Endothelial cell of umbilical vein (primary cell): ENCODE measurements at regions of chr15 and their contacts with region 1.

Region 1: DNA sequence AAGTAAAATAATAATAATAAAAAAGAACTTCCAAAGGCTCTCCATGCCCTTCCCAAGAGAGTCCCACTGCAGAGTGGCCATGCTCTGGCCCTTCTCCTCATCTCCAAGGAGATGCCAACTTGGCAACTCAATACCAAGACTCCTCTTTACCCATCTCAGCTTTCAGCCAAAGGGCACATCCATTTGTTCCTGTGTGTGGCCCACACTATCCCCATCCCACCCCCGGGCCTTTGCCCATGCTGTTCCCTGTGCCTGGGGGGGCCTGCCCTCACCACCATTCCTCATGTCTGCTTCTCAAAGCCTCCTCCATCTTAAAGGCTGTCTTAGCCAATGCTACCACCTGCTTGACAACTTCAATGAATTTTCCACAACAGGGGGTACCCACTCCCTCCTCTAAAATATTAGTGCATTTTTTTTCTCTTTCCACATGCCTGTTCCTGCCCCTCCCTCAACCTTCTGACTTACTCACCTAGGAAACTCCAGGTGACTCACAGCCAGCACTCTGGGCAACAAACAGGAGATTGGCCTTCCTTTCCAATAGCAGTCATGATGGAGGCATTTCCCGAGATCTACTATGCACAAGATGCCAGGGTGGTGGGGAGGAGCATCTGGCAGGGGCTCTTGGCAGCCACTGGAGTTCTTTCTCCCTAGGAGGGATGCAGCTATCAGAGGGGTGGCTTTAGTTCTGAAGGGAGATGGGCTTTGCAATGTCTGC is 109.4 kb upstream of the SMAD3 start:
- DNase-seq: peak; percentile 85
- H3K4me3 ChIP-seq: no peak overlapping the region
- H3K27ac ChIP-seq: peak overlapping the region; percentile 59
- H3K4me1 ChIP-seq: peaks cover 24% of the 10 kb centered on the region
- H3K27me3 ChIP-seq: no peaks in the 10 kb centered on the region
- CTCF ChIP-seq: no peak
- POLR2A ChIP-seq: no peak

Region 2: GRCh38 chr15:66765478-66766281 is 190.3 kb before region 1 on chr15:
- CTCF ChIA-PET with region 1: no interaction called
- POLR2A ChIA-PET with region 1: no interaction called
- dilution Hi-C with region 1: no loop called
- intact Hi-C with region 1: no loop called
- DNase-seq: peak; percentile 93
- H3K4me3 ChIP-seq: no peak overlapping the region
- H3K27ac ChIP-seq: peak overlapping the region; percentile 84
- H3K4me1 ChIP-seq: peaks cover 66% of the 10 kb centered on the region
- H3K27me3 ChIP-seq: no peaks in the 10 kb centered on the region
- CTCF ChIP-seq: no peak
- POLR2A ChIP-seq: peak; percentile 30

Region 3: GRCh38 chr15:66931768-66932633 is 24.0 kb before region 1 on chr15:
- CTCF ChIA-PET with region 1: no interaction called
- POLR2A ChIA-PET with region 1: no interaction called
- dilution Hi-C with region 1: no loop called
- intact Hi-C with region 1: loop called (anchors 2 kb)
- DNase-seq: peak; percentile 58
- H3K4me3 ChIP-seq: no peak overlapping the region
- H3K27ac ChIP-seq: peak overlapping the region; percentile 21
- H3K4me1 ChIP-seq: peaks cover 14% of the 10 kb centered on the region
- H3K27me3 ChIP-seq: no peaks in the 10 kb centered on the region
- CTCF ChIP-seq: no peak
- POLR2A ChIP-seq: no peak

Region 4: GRCh38 chr15:66986951-66987350 is 30.9 kb after region 1 on chr15:
- CTCF ChIA-PET with region 1: no interaction called
- POLR2A ChIA-PET with region 1: no interaction called
- dilution Hi-C with region 1: no loop called
- intact Hi-C with region 1: no loop called
- DNase-seq: no peak
- H3K4me3 ChIP-seq: no peak overlapping the region
- H3K27ac ChIP-seq: no peak overlapping the region
- H3K4me1 ChIP-seq: no peaks in the 10 kb centered on the region
- H3K27me3 ChIP-seq: peaks cover 2 to 3% of the 10 kb centered on the region in 2 experiments
- CTCF ChIP-seq: no peak
- POLR2A ChIP-seq: no peak

Region 5: GRCh38 chr15:67013696-67014095 is 57.7 kb after region 1 on chr15:
- CTCF ChIA-PET with region 1: no interaction called
- POLR2A ChIA-PET with region 1: no interaction called
- dilution Hi-C with region 1: no loop called
- intact Hi-C with region 1: loop called (anchors 2 kb)
- DNase-seq: peak; percentile 97
- H3K4me3 ChIP-seq: no peak overlapping the region
- H3K27ac ChIP-seq: peak overlapping the region; percentile 73
- H3K4me1 ChIP-seq: peaks cover 21% of the 10 kb centered on the region
- H3K27me3 ChIP-seq: no peaks in the 10 kb centered on the region
- CTCF ChIP-seq: no peak
- POLR2A ChIP-seq: peak; percentile 60

Region 6: GRCh38 chr15:67024314-67024997 is 68.4 kb after region 1 on chr15:
- CTCF ChIA-PET with region 1: interaction called, 3 read pairs
- POLR2A ChIA-PET with region 1: no interaction called
- dilution Hi-C with region 1: no loop called
- intact Hi-C with region 1: loop called (anchors 1 kb)
- DNase-seq: peak; percentile 92
- H3K4me3 ChIP-seq: no peak overlapping the region
- H3K27ac ChIP-seq: peak overlapping the region; percentile 77
- H3K4me1 ChIP-seq: peaks cover 38% of the 10 kb centered on the region
- H3K27me3 ChIP-seq: no peaks in the 10 kb centered on the region
- CTCF ChIP-seq: no peak
- POLR2A ChIP-seq: no peak

Region 7: DNA sequence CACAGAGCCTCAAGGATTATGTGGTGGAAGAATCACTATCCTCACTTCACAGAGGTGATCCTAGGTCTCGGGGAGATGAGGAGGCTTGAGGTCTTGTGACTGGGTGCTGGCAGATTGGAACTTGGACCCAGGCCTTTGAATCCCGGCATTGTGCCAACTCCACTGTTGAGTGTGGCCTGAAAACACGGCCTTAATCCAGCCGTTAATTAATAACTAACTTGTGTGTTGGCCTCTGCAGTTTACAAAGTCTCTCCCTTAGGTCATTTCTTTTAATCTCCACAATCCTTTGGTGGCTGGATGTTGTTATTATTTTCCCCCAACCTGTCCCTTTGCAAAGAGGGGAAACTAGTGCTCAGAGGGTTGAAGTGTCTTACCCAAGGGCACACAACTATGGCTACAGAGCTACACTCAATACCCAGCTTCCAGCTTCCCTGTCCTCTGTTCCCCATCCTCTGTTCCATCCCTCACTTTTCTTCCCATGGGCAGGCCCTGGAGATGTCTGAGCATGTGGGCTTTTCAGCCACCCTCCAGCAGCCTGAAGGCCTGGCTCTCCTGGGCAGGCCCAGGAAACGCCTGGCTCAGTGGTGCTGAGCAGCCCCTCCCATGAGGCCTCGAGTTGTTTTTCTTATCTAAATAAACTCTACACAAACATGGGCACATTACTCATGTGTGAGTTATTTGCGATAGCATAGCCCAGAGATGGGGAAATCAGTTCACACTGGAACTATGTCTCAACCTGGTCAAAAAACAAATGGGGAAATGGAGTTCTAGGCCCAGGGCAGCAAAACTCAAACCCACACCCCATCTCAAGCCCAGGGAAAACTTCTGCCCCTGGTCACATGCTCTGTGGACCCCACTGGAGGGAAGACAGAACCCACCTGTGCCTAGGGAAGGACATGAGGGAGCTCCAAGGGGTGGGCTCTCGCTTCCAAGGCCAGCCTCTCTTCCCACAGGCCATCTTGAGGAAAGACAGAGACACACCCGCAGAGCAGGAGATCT is 92.6 kb after region 1 on chr15:
- CTCF ChIA-PET with region 1: no interaction called
- POLR2A ChIA-PET with region 1: no interaction called
- dilution Hi-C with region 1: no loop called
- intact Hi-C with region 1: loop called (anchors 5 kb)
- DNase-seq: peak; percentile 68
- H3K4me3 ChIP-seq: no peak overlapping the region
- H3K27ac ChIP-seq: peak overlapping the region; percentile 93
- H3K4me1 ChIP-seq: peaks cover 29% of the 10 kb centered on the region
- H3K27me3 ChIP-seq: no peaks in the 10 kb centered on the region
- CTCF ChIP-seq: no peak
- POLR2A ChIP-seq: no peak

Region 8: DNA sequence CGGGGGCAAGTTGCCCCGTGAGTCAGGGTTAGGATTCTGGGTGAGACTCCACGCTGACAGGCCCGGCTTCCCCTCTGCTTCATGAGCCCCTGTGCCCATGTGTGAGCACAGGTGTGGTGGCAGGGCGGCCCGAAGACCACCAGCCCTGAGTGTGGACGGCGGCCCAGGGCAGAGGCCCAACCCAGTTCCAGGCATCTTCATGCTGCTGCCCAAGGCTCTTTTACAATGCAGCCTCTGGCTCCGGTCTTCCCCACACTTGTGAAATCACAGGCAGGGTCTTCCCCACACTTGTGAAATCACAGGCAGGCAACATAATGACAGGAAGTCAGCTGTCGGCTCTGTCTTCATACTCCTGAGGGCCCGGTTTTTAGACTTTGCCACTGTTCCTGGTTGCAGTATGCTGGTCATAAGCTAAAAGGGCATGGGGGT is 219.6 kb after region 1 on chr15:
- CTCF ChIA-PET with region 1: no interaction called
- POLR2A ChIA-PET with region 1: no interaction called
- dilution Hi-C with region 1: no loop called
- intact Hi-C with region 1: loop called (anchors 5 kb)
- DNase-seq: peak; percentile 54
- H3K4me3 ChIP-seq: no peak overlapping the region
- H3K27ac ChIP-seq: peak overlapping the region; percentile 87
- H3K4me1 ChIP-seq: peaks cover 56% of the 10 kb centered on the region
- H3K27me3 ChIP-seq: no peaks in the 10 kb centered on the region
- CTCF ChIP-seq: no peak
- POLR2A ChIP-seq: no peak